CD8-positive, alpha-beta T cell (primary cell): ENCODE measurements at regions of chr14 and their contacts with region 1.

Region 1: GRCh38 chr14:64928239-64929013 is 14.1 kb downstream of the GPX2 start:
- DNase-seq: peak in 2 of 9 experiments; percentile 34 to 65
- ATAC-seq: peak; percentile 81
- H3K4me3 ChIP-seq: peak overlapping the region; percentile 0 to 26
- H3K4me3 Mint-ChIP-seq: no peak overlapping the region
- H3K27ac ChIP-seq: peak overlapping the region; percentile 49 to 79
- H3K27ac Mint-ChIP-seq: no peak overlapping the region
- H3K4me1 ChIP-seq: peaks cover 66% of the 10 kb centered on the region
- H3K4me1 Mint-ChIP-seq: peaks cover 28% of the 10 kb centered on the region
- H3K27me3 ChIP-seq: no peaks in the 10 kb centered on the region
- H3K27me3 Mint-ChIP-seq: no peaks in the 10 kb centered on the region
- CTCF ChIP-seq: no peak

Region 2: GRCh38 chr14:64971943-64972791 is 43.7 kb after region 1 on chr14 and contains the start of gene RAB15:
- CTCF ChIA-PET with region 1: interaction called, 3 read pairs
- POLR2A ChIA-PET with region 1: no interaction called
- intact Hi-C with region 1: loop called in 1 of 2 experiments (anchors 5 kb)
- DNase-seq: peak in 8 of 9 experiments; percentile 7 to 67 (median 46)
- ATAC-seq: peak; percentile 68
- H3K4me3 ChIP-seq: peak within 1 kb of the TSS; percentile 54 to 73
- H3K4me3 Mint-ChIP-seq: peak within 1 kb of the TSS; percentile 83
- H3K27ac ChIP-seq: no peak within 1 kb of the TSS
- H3K27ac Mint-ChIP-seq: peak within 1 kb of the TSS; percentile 62
- H3K4me1 ChIP-seq: peaks cover 16% of the 10 kb centered on the region
- H3K4me1 Mint-ChIP-seq: peaks cover 27% of the 10 kb centered on the region
- H3K27me3 ChIP-seq: no peaks in the 10 kb centered on the region
- H3K27me3 Mint-ChIP-seq: no peaks in the 10 kb centered on the region
- CTCF ChIP-seq: no peak
- total RNA-seq, gene RAB15: 2.9 to 3.6 TPM

Region 3: DNA sequence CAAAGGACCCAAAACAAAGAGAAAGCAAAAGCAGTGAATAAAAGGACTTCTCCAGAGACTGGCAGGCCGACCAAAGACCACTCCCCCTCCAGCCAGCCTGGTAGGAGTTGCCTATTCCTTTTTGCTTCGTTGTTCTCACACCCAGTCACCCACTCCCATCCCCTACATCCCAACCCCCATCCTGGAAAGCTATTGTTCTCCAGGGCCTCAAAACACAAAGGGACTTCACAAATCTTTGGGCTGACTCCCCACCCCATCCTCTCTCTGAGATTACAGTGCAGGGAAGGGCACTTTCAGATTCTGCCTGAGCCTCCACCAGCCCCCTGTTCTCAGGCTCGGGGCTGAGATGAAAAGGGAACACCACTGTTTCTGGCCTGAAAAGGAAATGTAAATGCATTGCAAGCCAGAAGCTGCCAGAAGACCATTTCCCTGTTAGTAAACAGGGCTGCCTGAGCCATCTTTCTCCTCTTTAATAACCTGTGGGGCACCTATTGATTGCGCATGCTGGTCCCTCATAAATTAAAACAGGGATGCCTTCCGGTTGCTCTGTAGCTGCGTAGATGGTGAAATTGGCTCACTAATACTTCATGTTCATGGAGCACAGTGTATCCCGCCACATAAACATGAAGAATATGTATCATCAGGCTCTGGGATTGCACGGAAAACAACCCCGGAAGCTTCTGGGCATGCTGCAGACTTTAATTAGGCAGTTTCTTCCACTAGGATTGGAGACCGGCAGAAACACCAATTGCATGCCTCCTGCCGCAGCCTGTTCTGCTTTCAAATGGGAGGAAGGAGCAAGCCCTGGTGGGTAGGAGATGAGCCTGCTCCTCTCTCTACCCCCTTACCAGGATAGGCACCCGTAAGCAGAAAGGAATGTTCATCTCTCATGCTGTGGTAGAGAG is 353.8 kb after region 1 on chr14:
- CTCF ChIA-PET with region 1: no interaction called
- POLR2A ChIA-PET with region 1: no interaction called
- intact Hi-C with region 1: loop called in 1 of 2 experiments (anchors 10 kb)
- DNase-seq: peak in 3 of 9 experiments; percentile 32 to 58 (median 42)
- ATAC-seq: peak; percentile 51
- H3K4me3 ChIP-seq: peak overlapping the region; percentile 25 to 32
- H3K4me3 Mint-ChIP-seq: peak overlapping the region; percentile 83
- H3K27ac ChIP-seq: peak overlapping the region; percentile 19 to 55
- H3K27ac Mint-ChIP-seq: peak overlapping the region; percentile 95
- H3K4me1 ChIP-seq: peaks cover 32% of the 10 kb centered on the region
- H3K4me1 Mint-ChIP-seq: peaks cover 42% of the 10 kb centered on the region
- H3K27me3 ChIP-seq: no peaks in the 10 kb centered on the region
- H3K27me3 Mint-ChIP-seq: no peaks in the 10 kb centered on the region
- CTCF ChIP-seq: no peak